Motor neuron (in vitro differentiated cells): ENCODE measurements at regions of chr3 and their contacts with region 1.

Region 1: DNA sequence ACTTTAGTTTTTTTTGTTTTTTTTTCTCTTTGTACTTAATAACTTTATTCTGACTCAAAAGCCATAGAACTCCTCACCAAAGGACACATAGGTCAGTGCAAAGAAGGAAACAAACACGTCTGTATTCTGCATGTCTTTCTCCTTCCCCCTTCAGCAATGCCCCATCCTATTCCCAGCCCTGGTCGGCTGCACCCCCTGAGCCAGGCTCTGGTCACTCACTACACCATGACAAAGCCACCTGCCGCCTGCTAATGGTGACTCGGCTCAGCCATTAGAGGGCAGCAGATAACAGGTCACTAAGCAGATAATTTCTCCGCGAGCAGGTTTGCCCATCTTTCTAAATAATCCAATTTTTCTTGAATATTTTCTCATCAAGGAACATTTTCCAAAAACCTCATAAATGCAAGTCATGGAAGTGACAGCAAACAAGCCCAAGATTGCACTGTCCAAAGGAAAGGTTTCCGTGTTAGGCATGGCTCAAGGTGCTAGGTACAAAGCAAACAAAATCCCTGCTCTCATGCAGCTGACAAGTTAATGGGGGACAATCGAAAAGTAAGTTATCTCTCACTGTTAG is 37.8 kb downstream of the TM4SF4 start:
- ATAC-seq: peak; percentile 35 to 97 (median 88)
- H3K4me3 ChIP-seq: peak overlapping the region in 4 of 5 donors; percentile 8 to 24 (median 12)
- H3K27ac ChIP-seq: no peak overlapping the region
- H3K4me1 ChIP-seq: no peaks in the 10 kb centered on the region

Region 2: DNA sequence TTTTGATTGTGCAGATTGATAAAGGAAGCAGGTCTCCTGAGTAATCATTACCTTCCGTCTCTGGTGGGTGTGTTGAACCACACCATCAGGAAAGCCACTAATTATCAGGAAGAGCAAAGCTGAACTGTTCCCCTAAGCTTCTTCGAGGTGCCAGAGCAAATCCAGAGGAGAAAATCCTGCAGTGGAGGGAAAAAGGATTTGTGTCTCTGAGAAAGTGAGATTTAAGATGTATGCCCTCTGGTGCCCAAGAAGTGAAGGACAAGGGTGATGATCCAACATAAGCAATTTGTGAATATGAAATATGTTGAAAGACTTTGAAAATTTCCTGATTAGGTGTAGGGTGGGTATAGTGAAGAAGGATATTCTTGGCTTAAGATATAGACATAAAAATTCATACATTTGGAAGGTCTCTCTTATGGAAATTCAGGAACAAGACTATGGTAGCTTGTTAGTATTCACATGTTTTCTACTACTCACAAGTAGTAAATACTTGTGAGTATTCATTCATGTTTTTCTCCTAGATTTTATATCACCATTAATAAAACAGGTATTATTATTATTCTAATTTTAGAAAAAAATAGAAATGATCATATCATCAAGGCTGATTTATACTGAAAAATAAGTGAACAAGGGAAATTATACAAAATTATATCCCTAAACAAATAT is 205.2 kb after region 1 on chr3:
- in situ Hi-C with region 1: loop called in 7 of 9 experiments (anchors 10 to 25 kb)
- ATAC-seq: peak in 5 of 8 experiments; percentile 37 to 78 (median 45)
- H3K4me3 ChIP-seq: no peak overlapping the region
- H3K27ac ChIP-seq: no peak overlapping the region
- H3K4me1 ChIP-seq: no peaks in the 10 kb centered on the region

Region 3: DNA sequence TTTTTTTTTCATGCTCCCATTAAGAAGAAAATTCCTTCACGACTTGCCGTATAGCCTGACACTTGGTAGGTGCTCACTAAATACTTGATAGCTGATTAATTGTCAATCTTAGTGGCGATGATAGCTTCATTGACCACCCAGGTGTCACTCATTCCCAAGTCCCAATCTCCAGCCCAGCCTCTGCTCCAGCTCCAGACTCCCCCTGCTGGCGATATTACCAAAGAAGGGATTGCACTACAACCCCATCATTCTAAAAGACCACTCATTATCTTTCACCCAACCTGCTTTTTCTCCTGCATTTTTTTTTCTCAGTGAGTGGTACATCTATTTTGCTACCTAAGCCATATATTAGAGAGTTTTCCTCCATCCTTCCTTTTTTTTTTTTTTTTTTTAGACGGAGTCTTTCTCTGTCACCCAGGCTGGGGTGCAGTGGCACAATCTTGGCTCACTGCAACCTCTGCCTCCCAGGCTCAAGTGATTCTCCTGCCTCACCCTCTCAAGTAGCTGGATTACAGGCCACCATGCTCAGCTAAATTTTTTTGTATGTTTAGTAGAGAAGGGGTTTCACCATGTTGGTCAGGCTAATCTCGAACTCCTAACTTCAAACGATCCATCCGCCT is 259.5 kb after region 1 on chr3:
- in situ Hi-C with region 1: loop called in 1 of 9 experiments (anchors 10 kb)
- ATAC-seq: peak in 4 of 8 experiments; percentile 49 to 80 (median 68)
- H3K4me3 ChIP-seq: no peak overlapping the region
- H3K27ac ChIP-seq: no peak overlapping the region
- H3K4me1 ChIP-seq: peaks cover 0 to 3% of the 10 kb centered on the region in 2 donors

Region 4: DNA sequence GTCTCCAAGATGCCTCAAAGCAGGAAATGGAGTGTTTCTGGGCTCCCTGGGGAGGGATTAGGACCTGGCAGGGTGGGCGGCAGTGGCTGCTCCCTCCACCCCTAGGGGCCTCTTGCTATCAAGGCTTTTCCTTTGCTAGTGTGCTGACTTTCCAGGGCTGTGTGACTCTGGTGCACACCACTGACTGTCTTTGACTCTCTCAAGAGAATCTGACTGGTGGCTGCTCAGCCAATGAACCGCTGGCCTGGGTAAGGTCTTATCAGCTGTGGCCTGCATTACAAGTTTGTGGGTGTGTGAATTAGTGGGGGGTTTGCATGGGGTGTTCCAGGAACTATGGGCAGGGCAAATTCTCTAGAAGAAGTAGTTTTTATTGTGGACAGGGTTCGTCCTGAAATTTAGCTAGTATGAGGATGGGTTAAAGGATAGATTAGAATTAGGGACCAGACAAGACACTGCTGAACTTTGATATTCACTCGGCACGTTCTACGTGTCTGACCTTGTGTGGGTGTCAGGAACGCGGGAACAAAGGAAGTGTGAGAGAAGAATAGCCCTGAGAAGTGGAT is 1221.2 kb after region 1 on chr3:
- in situ Hi-C with region 1: no loop called
- ATAC-seq: peak in 3 of 8 experiments; percentile 42 to 52 (median 50)
- H3K4me3 ChIP-seq: no peak overlapping the region
- H3K27ac ChIP-seq: no peak overlapping the region
- H3K4me1 ChIP-seq: peaks cover 0 to 7% of the 10 kb centered on the region in 2 donors